ENCODE measurements at regions of chr19 and their contacts with region 1.

Region 1: GRCh38 chr19:6125571-6125989 is 9.9 kb upstream of the ACSBG2 start:
- DNase-seq: peak; percentile 75
- H3K4me3 ChIP-seq: no peak overlapping the region
- H3K27ac ChIP-seq: no peak overlapping the region
- H3K4me1 ChIP-seq: no peaks in the 10 kb centered on the region
- H3K27me3 ChIP-seq: no peaks in the 10 kb centered on the region
- CTCF ChIP-seq: peak; percentile 91 to 95
- POLR2A ChIP-seq: no peak

Region 2: DNA sequence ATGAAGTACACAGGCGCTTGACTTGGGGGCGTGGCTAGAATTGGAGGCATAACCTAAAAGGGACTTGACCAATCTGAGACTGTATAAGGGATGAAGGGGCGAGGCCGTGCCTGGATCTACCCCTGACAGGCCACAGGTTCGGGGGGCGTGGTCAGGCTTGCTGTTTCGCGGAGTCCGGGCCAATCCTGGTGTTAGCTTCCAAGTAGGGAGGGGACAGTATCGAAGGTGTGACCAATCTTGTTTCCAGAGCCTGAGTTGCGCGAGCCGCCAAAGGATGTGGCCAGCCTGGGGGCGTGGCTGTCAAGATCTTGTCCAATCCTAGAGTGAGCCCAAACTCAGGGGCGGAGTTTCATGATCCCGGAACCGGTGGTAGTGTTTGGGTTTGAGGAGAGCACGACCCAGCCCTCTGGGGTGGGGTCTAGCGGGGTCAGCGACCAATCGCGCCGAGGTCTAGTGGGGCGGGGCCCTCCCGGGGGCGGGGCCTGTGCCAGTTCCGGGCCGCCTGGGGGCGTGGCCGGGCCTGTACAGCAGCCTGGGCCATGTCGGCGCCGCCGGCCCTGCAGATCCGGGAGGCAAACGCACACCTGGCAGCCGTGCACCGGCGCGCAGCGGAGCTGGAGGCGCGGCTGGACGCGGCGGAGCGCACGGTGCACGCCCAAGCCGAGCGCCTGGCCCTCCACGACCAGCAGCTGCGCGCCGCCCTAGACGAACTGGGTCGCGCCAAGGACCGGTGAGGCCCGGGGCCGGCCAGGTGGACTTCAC is 221.0 kb before region 1 on chr19 and contains the start of gene VMAC:
- CTCF ChIA-PET with region 1: no interaction called
- POLR2A ChIA-PET with region 1: no interaction called
- dilution Hi-C with region 1: no loop called
- intact Hi-C with region 1: no loop called
- DNase-seq: peak; percentile 100
- H3K4me3 ChIP-seq: peak within 1 kb of the TSS; percentile 45 to 89 (median 86)
- H3K27ac ChIP-seq: peak within 1 kb of the TSS; percentile 90
- H3K4me1 ChIP-seq: peaks cover 8% of the 10 kb centered on the region
- H3K27me3 ChIP-seq: no peaks in the 10 kb centered on the region
- CTCF ChIP-seq: no peak
- POLR2A ChIP-seq: peak; percentile 56
- total RNA-seq, gene VMAC: 4.4 and 4.7 TPM in 2 replicates

Region 3: GRCh38 chr19:6021878-6022569 is 103.6 kb before region 1 on chr19:
- CTCF ChIA-PET with region 1: interaction called, 18 read pairs
- POLR2A ChIA-PET with region 1: no interaction called
- dilution Hi-C with region 1: loop called (anchors 25 kb)
- intact Hi-C with region 1: no loop called
- DNase-seq: peak; percentile 71
- H3K4me3 ChIP-seq: no peak overlapping the region
- H3K27ac ChIP-seq: no peak overlapping the region
- H3K4me1 ChIP-seq: peaks cover 12% of the 10 kb centered on the region
- H3K27me3 ChIP-seq: no peaks in the 10 kb centered on the region
- CTCF ChIP-seq: peak; percentile 80 to 85
- POLR2A ChIP-seq: no peak

Region 4: DNA sequence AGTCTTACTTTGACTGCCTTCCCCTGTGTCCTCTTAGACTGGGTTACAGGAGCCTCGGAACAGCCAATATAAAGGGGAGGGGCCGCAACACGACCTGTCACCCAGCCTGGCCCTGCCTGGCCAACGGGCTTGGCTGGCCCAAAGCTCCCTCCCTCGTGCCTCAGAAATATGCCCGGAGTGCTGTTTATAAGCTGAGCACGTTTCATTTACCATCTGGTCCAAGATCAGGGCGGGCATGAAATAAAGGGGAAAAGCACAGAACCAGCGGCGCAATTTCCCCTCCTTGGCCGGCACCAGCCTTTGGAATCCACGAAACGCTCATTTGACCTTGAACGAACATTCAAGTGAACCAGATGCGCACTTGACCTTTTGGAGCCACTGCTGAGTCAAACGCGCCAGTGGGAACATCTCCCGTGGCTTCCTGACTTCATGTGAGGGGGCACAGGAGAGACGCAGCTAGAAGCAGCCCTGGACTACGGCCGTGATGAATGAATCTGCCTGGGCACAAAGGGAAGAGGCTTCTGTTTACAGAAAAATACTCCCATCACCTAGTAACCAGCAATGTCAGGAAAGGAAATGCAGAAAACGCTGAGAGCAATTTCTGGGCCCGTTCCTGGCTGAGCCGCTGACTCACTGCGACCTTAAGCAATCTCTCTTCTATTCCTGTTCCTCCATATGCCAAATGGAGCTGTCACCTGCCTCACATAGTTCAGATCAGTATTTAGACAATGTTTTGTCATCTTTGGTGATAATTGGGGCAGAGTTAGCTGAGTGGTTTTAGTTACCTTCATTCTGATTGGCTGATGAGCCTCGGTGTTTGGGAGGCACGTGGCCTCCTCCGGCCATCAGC is 68.6 kb before region 1 on chr19:
- CTCF ChIA-PET with region 1: interaction called, 77 read pairs
- POLR2A ChIA-PET with region 1: interaction called, 4 read pairs
- dilution Hi-C with region 1: no loop called
- intact Hi-C with region 1: loop called (anchors 1 kb)
- DNase-seq: peak; percentile 98
- H3K4me3 ChIP-seq: no peak overlapping the region
- H3K27ac ChIP-seq: peak overlapping the region; percentile 97
- H3K4me1 ChIP-seq: peaks cover 43% of the 10 kb centered on the region
- H3K27me3 ChIP-seq: no peaks in the 10 kb centered on the region
- CTCF ChIP-seq: no peak
- POLR2A ChIP-seq: no peak

Region 5: GRCh38 chr19:6092329-6093286 is 33.0 kb before region 1 on chr19:
- CTCF ChIA-PET with region 1: interaction called, 13 read pairs
- POLR2A ChIA-PET with region 1: interaction called, 4 read pairs
- dilution Hi-C with region 1: no loop called
- intact Hi-C with region 1: loop called (anchors 1 kb)
- DNase-seq: peak; percentile 70
- H3K4me3 ChIP-seq: no peak overlapping the region
- H3K27ac ChIP-seq: peak overlapping the region; percentile 51
- H3K4me1 ChIP-seq: peaks cover 32% of the 10 kb centered on the region
- H3K27me3 ChIP-seq: no peaks in the 10 kb centered on the region
- CTCF ChIP-seq: no peak
- POLR2A ChIP-seq: no peak

Region 6: DNA sequence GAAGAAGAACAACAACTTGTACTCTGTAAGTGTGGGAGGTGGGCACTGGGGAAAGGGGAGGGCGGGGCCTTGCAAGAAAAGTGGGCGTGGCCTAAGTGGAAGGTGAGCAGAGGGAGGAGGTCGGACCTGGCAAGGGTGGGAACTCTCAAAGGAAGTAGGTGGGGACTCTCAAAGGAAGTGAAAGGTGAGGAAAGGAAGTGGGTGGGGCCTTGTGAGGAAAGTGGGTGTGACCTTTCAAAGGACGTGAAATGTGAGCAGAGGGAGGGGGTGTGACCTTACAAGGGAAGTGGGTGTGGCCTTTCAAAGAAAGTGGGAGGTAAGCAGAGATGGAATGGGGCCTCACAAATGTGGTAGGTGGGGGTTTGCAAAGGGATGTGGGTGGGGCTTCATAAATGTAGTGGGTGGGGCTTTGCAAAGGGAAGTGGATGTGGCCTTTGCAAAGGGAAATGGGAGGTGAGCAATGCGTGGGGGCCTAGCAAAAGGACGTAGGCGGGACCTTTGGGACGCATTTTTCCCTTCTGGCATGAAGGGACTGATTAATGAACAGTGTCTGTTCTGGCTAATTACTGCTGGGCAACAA is 35.8 kb after region 1 on chr19:
- CTCF ChIA-PET with region 1: interaction called, 4 read pairs
- POLR2A ChIA-PET with region 1: no interaction called
- dilution Hi-C with region 1: no loop called
- intact Hi-C with region 1: loop called (anchors 1 kb)
- DNase-seq: peak; percentile 7
- H3K4me3 ChIP-seq: no peak overlapping the region
- H3K27ac ChIP-seq: no peak overlapping the region
- H3K4me1 ChIP-seq: no peaks in the 10 kb centered on the region
- H3K27me3 ChIP-seq: no peaks in the 10 kb centered on the region
- CTCF ChIP-seq: no peak
- POLR2A ChIP-seq: no peak

Region 7: DNA sequence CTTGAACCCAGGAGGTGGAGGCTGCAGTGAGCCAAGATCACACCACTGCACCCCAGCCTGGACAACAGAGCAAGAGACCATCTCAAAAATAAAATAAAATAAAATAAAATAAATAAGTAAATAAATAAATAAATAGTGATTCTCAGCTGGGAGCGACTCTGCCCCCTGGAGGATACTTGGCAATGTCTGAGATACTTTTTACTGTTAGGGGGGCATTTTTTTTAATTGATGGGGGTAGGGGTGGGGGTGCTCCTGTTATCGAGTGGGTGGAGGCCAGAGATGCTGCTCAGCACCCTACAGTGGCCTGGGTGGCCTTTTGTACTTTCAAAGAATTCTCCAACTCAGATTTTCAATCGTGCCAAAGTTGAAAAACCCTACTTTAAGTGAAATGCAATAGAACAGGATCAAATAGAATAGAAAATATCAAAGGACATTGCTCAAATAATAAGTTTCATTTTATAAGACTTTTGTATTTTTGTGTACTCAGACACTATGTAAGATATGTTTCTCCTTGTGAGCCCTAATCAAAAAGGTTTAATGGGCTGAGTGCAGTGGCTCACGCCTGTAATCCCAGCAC is 228.6 kb after region 1 on chr19:
- CTCF ChIA-PET with region 1: interaction called, 55 read pairs
- POLR2A ChIA-PET with region 1: no interaction called
- dilution Hi-C with region 1: no loop called
- intact Hi-C with region 1: no loop called
- DNase-seq: no peak
- H3K4me3 ChIP-seq: no peak overlapping the region
- H3K27ac ChIP-seq: no peak overlapping the region
- H3K4me1 ChIP-seq: no peaks in the 10 kb centered on the region
- H3K27me3 ChIP-seq: no peaks in the 10 kb centered on the region
- CTCF ChIP-seq: peak; percentile 15 to 51
- POLR2A ChIP-seq: no peak